ENCODE measurements at regions of chr4 and their contacts with region 1.

Region 1: GRCh38 chr4:38759113-38759789 is 23.5 kb downstream of the TLR10 start:
- DNase-seq: peak; percentile 83
- H3K4me3 ChIP-seq: peak overlapping the region; percentile 18
- H3K27ac ChIP-seq: peak overlapping the region; percentile 99
- H3K4me1 ChIP-seq: peaks cover 63% of the 10 kb centered on the region
- CTCF ChIP-seq: peak; percentile 95

Region 2: GRCh38 chr4:38804654-38805295 is 45.5 kb after region 1 on chr4 and contains the start of gene TLR1:
- CTCF ChIA-PET with region 1: interaction called, 21 read pairs
- POLR2A ChIA-PET with region 1: interaction called, 54 read pairs
- intact Hi-C with region 1: loop called (anchors 1 kb)
- DNase-seq: peak; percentile 72
- H3K4me3 ChIP-seq: peak within 1 kb of the TSS; percentile 62
- H3K27ac ChIP-seq: peak within 1 kb of the TSS; percentile 96
- H3K4me1 ChIP-seq: peaks cover 26% of the 10 kb centered on the region
- CTCF ChIP-seq: peak; percentile 85
- total RNA-seq, gene TLR1: 3.3 and 3.8 TPM in 2 replicates

Region 3: DNA sequence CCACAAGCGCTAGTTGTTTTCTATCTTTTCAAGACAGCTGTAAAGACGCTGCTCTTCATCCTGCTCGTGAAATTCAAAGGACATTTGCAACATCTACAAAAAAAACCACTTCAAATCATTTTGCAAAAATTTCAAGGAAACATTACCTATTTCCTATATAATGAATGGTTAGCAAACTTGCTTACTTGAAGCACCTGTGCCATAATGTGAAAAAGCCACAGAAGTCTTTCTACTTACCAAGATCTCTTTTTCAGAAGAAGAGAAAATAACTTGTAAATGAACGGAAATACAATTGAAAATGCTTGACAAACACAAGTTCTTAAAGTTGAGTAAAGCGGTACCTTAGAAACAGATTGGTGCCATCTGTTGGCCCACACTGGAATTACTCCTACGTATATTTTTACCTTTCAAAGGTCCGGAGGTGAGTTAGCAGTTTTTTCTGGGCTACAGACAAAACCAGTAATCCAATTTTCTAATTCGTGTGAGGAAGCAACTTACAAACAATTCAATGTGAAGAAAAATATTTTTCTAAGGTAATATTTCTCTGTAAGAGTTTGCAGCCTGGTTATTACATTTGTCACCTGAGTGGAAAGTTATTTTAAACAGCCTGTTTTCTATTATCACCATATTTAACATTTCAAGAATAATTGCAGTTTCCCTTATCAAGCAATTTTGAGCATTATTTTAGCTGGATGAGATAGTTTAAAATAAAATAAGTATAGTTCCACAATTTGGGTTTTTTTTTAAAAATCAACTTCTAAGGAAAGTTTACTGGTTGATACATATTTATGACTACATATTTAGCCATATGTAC is 97.5 kb after region 1 on chr4 and contains the start of gene TLR6:
- CTCF ChIA-PET with region 1: interaction called, 11 read pairs
- POLR2A ChIA-PET with region 1: interaction called, 29 read pairs
- intact Hi-C with region 1: loop called (anchors 1 kb)
- DNase-seq: peak; percentile 88
- H3K4me3 ChIP-seq: peak within 1 kb of the TSS; percentile 71
- H3K27ac ChIP-seq: peak within 1 kb of the TSS; percentile 77
- H3K4me1 ChIP-seq: peaks cover 51% of the 10 kb centered on the region
- CTCF ChIP-seq: peak; percentile 96
- total RNA-seq, gene TLR6: 1.5 TPM in 2 replicates

Region 4: GRCh38 chr4:38894340-38894982 is 135.2 kb after region 1 on chr4:
- CTCF ChIA-PET with region 1: interaction called, 3 read pairs
- POLR2A ChIA-PET with region 1: no interaction called
- intact Hi-C with region 1: loop called (anchors 1 kb)
- DNase-seq: peak; percentile 10
- H3K4me3 ChIP-seq: no peak overlapping the region
- H3K27ac ChIP-seq: no peak overlapping the region
- H3K4me1 ChIP-seq: no peaks in the 10 kb centered on the region
- CTCF ChIP-seq: peak; percentile 55